Activated B cell treated with CpG ODN at 0.5 μM for 24 hours (primary cell): ENCODE measurements at regions of chr1 and their contacts with region 1.

Region 1: GRCh38 chr1:226679853-226680516 is 59.1 kb downstream of the ITPKB start:
- DNase-seq: peak; percentile 69
- ATAC-seq: peak; percentile 38
- H3K4me3 Mint-ChIP-seq: peak overlapping the region; percentile 86
- H3K27ac Mint-ChIP-seq: peak overlapping the region; percentile 97
- H3K4me1 Mint-ChIP-seq: peaks cover 99% of the 10 kb centered on the region
- H3K27me3 Mint-ChIP-seq: no peaks in the 10 kb centered on the region
- CTCF ChIP-seq: no peak

Region 2: GRCh38 chr1:226157761-226158316 is 522.1 kb before region 1 on chr1:
- CTCF ChIA-PET with region 1: no interaction called
- POLR2A ChIA-PET with region 1: no interaction called
- intact Hi-C with region 1: no loop called
- DNase-seq: no peak
- ATAC-seq: peak; percentile 80
- H3K4me3 Mint-ChIP-seq: peak overlapping the region; percentile 29
- H3K27ac Mint-ChIP-seq: peak overlapping the region; percentile 89
- H3K4me1 Mint-ChIP-seq: peaks cover 78% of the 10 kb centered on the region
- H3K27me3 Mint-ChIP-seq: no peaks in the 10 kb centered on the region
- CTCF ChIP-seq: no peak

Region 3: GRCh38 chr1:226634166-226634588 is 45.8 kb before region 1 on chr1:
- CTCF ChIA-PET with region 1: interaction called, 4 read pairs
- POLR2A ChIA-PET with region 1: interaction called, 14 read pairs
- intact Hi-C with region 1: no loop called
- DNase-seq: peak; percentile 81
- ATAC-seq: peak; percentile 72
- H3K4me3 Mint-ChIP-seq: no peak overlapping the region
- H3K27ac Mint-ChIP-seq: peak overlapping the region; percentile 60
- H3K4me1 Mint-ChIP-seq: peaks cover 72% of the 10 kb centered on the region
- H3K27me3 Mint-ChIP-seq: no peaks in the 10 kb centered on the region
- CTCF ChIP-seq: peak; percentile 56

Region 4: DNA sequence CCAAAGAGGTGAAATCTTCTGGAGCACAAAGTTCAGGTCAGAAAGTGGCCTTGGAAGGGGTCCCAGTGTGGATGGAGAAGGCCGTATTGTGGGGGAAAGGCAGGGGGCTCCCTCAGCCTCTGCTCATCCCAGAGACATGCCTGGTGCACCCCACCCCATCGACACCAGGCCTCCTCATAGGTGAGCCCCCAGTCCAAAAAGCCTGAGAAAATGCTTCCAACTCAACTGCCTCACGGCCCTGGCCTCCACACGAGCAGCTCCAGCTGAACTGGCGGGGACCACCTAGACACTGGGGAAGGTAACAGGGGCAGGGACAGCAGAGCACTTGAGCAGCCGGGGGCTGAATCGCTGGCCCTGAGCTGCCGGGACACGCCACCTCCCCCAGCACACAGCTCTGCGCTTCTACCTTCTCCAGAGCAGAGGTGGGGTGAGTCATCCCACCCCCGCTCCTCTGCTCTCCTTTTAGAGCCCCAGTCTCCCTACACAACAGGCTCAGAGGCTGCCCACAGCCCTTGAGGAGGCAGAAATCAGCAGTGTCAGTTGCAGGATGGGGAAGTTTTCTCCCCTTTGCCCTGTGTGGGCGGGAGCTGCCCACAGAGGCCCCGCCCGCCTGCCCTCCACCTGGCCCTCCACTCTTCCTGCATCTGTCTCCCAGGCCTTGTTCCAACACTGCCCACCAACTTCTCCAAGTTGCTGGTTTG is 37.0 kb before region 1 on chr1:
- CTCF ChIA-PET with region 1: interaction called, 7 read pairs
- POLR2A ChIA-PET with region 1: interaction called, 451 read pairs
- intact Hi-C with region 1: loop called (anchors 1 kb)
- DNase-seq: peak; percentile 52
- ATAC-seq: peak; percentile 63
- H3K4me3 Mint-ChIP-seq: peak overlapping the region; percentile 67
- H3K27ac Mint-ChIP-seq: peak overlapping the region; percentile 88
- H3K4me1 Mint-ChIP-seq: peaks cover 76% of the 10 kb centered on the region
- H3K27me3 Mint-ChIP-seq: no peaks in the 10 kb centered on the region
- CTCF ChIP-seq: no peak

Region 5: GRCh38 chr1:226668173-226668560 is 11.8 kb before region 1 on chr1:
- CTCF ChIA-PET with region 1: interaction called, 13 read pairs
- POLR2A ChIA-PET with region 1: interaction called, 451 read pairs
- intact Hi-C with region 1: loop called (anchors 1 kb)
- DNase-seq: no peak
- ATAC-seq: no peak
- H3K4me3 Mint-ChIP-seq: no peak overlapping the region
- H3K27ac Mint-ChIP-seq: no peak overlapping the region
- H3K4me1 Mint-ChIP-seq: peaks cover 92% of the 10 kb centered on the region
- H3K27me3 Mint-ChIP-seq: no peaks in the 10 kb centered on the region
- CTCF ChIP-seq: no peak

Region 6: DNA sequence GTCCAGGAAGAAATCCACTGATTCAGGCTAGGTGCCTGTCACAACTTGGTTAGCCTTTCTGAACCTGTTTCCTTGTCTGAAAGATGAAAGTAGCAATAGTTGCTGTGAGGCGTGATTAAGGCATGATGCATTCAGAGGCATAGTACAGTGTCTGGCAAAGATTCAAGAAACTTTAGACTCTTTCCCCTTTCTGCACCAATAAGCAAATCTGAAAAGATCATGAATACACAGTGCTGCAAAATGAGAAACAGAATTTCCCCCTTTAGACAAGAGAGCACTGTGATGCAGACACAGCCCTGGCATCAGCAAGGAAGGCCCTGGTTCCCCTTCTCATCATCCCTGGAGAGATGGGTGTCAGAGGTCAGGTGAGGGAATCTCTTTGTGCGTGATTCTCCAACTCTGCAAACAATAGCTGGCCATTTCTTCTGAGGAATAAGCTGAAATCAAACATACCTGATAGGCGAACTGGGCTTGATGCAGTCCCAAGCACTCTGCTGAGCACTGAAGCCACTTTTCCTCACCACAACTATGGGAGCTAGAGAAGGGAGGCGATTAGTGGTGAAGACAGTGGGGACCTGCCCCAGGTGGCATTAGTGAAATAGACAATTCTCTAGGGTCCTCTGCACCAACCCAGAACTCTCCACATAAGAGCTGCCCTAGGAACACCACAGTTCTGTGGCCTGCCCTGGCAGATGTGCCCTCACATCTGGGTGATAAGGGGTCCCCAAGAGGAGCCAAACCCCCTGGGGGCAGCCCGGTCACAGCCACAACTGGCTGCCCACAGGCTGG is 17.4 kb after region 1 on chr1:
- CTCF ChIA-PET with region 1: interaction called, 5 read pairs
- POLR2A ChIA-PET with region 1: interaction called, 199 read pairs
- intact Hi-C with region 1: loop called (anchors 1 kb)
- DNase-seq: peak; percentile 54
- ATAC-seq: peak; percentile 82
- H3K4me3 Mint-ChIP-seq: peak overlapping the region; percentile 77
- H3K27ac Mint-ChIP-seq: peak overlapping the region; percentile 96
- H3K4me1 Mint-ChIP-seq: peaks cover 94% of the 10 kb centered on the region
- H3K27me3 Mint-ChIP-seq: no peaks in the 10 kb centered on the region
- CTCF ChIP-seq: no peak

Region 7: GRCh38 chr1:226702957-226703831 is 23.2 kb after region 1 on chr1:
- CTCF ChIA-PET with region 1: interaction called, 4 read pairs
- POLR2A ChIA-PET with region 1: interaction called, 199 read pairs
- intact Hi-C with region 1: loop called (anchors 1 kb)
- DNase-seq: peak; percentile 90
- ATAC-seq: peak; percentile 90
- H3K4me3 Mint-ChIP-seq: peak overlapping the region; percentile 76
- H3K27ac Mint-ChIP-seq: peak overlapping the region; percentile 93
- H3K4me1 Mint-ChIP-seq: peaks cover 78% of the 10 kb centered on the region
- H3K27me3 Mint-ChIP-seq: no peaks in the 10 kb centered on the region
- CTCF ChIP-seq: no peak

Region 8: GRCh38 chr1:226761322-226761721 is 81.3 kb after region 1 on chr1:
- CTCF ChIA-PET with region 1: no interaction called
- POLR2A ChIA-PET with region 1: interaction called, 10 read pairs
- intact Hi-C with region 1: no loop called
- DNase-seq: no peak
- ATAC-seq: no peak
- H3K4me3 Mint-ChIP-seq: no peak overlapping the region
- H3K27ac Mint-ChIP-seq: no peak overlapping the region
- H3K4me1 Mint-ChIP-seq: peaks cover 2% of the 10 kb centered on the region
- H3K27me3 Mint-ChIP-seq: peaks cover 15% of the 10 kb centered on the region
- CTCF ChIP-seq: no peak

Region 9: GRCh38 chr1:226870401-226871279 is 190.7 kb after region 1 on chr1 and contains the start of gene PSEN2:
- CTCF ChIA-PET with region 1: no interaction called
- POLR2A ChIA-PET with region 1: no interaction called
- intact Hi-C with region 1: no loop called
- DNase-seq: peak; percentile 80
- ATAC-seq: peak; percentile 96
- H3K4me3 Mint-ChIP-seq: peak within 1 kb of the TSS; percentile 87
- H3K27ac Mint-ChIP-seq: peak within 1 kb of the TSS; percentile 53
- H3K4me1 Mint-ChIP-seq: peaks cover 24% of the 10 kb centered on the region
- H3K27me3 Mint-ChIP-seq: no peaks in the 10 kb centered on the region
- CTCF ChIP-seq: no peak
- total RNA-seq, gene PSEN2: 13.4 and 14.3 TPM in 2 replicates